SK-MEL-5 (cell line): ENCODE measurements at regions of chr6 and their contacts with region 1.

Region 1: DNA sequence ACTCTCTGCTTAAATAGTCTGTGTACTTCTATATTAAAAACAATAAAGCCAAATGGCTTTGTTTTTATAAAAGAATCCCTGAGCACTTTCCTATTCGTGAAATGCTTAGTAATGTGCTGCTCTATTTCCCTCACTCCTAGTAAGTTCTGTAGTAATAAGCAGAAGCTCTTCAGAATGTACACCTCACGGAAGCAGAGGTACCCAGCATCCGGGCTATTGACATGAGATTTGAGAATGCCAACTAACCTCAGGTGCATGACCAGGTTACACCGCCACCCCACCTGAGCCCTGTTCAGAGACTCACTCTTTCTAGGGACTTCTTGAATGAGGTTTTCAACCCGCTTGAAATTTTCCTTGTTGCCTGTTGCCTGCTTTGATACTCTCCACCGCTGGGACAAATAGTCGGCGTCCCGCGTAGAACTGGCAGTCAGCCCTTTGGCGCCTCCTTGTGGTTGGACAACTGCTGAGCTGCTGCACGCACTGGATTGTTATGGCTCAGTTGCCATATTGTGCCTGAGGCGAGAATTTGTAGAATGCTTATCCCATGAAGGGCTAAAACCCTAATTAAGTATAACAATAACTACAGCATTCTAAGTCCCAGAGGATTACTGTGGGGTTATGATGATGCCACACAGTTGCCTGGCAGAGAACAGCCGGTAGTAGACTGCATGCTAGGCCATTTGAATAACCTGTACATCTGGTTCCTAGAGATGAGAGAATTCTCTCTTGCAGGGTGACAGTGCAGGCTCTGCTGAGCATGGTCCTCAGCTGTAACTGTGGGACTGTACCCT is 95.4 kb downstream of the KHDC1L start:
- DNase-seq: peak; percentile 91

Region 2: GRCh38 chr6:72622094-72622940 is 507.5 kb before region 1 on chr6:
- in situ Hi-C with region 1: loop called (anchors 25 kb)
- DNase-seq: peak; percentile 72

Region 3: DNA sequence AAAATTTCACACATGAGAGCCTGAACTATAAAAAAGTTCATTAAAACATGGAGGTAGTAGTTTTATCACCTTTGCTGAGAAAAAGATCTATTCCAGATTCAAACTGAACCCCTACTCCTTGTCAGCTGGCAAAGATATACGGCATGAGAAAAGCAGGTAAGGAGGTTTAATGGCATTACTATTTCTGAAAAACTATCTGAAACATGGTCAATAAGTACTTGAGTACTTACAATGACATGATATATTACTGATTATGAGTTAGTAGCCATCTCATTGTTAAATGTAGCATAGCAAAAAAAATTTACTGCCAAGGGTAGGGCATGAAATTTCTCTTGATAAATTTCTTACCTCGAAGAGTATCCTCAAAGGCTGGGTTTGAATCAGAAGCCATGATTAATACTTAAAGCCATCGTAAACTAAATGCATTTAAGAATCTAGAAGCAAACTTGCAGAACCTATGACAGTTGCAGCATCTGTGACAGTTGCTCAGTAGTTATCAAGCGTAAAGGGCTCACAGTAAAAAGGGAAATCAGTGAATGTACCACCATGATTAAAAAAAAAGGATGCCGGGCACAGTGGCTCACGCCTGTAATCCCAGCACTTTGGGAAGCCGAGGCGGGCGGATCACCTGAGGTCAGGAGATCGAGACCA is 515.2 kb after region 1 on chr6:
- in situ Hi-C with region 1: no loop called
- DNase-seq: no peak